Endothelial cell of umbilical vein (primary cell): ENCODE measurements at regions of chr7 and their contacts with region 1.

Region 1: DNA sequence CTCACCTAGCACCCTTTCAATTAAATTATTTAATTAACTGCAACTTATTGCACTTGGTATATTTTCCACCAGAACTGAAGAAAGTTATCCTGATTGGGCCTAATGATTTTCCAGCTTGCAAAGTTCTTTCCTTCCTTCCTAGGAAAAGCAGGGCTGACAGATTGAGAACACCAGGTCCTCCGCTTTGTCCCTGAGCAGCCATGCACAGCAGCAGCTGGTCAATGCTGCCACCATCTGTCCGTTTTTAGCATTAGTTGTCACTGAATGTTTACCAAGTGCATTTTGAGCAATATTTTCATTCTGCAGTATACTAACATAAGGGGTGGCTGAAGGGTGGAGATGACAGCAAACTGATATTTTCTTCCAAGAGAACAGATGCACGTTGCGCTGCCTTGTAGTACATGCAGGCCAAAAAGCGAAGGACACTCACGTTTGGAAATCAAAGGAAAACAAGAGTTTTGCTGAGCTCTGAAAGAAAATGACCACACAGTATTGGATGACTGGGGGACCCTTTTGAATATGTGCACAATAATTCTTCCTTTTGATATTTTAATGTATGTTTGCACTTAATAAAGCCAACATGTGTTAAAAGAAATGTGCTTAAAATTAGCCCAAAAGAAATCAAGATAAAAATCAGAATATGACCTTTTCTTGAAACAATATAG is 248.8 kb upstream of the PTN start:
- DNase-seq: peak; percentile 85
- H3K4me3 ChIP-seq: no peak overlapping the region
- H3K27ac ChIP-seq: peak overlapping the region; percentile 83
- H3K4me1 ChIP-seq: peaks cover 10% of the 10 kb centered on the region
- H3K27me3 ChIP-seq: peaks cover 0 to 1% of the 10 kb centered on the region in 2 experiments
- CTCF ChIP-seq: peak; percentile 64 to 90
- POLR2A ChIP-seq: no peak

Region 2: GRCh38 chr7:136405931-136406777 is 1186.2 kb before region 1 on chr7:
- CTCF ChIA-PET with region 1: interaction called, 13 read pairs
- POLR2A ChIA-PET with region 1: no interaction called
- dilution Hi-C with region 1: no loop called
- intact Hi-C with region 1: no loop called
- DNase-seq: peak; percentile 48
- H3K4me3 ChIP-seq: no peak overlapping the region
- H3K27ac ChIP-seq: no peak overlapping the region
- H3K4me1 ChIP-seq: no peaks in the 10 kb centered on the region
- H3K27me3 ChIP-seq: no peaks in the 10 kb centered on the region
- CTCF ChIP-seq: peak; percentile 55 to 67
- POLR2A ChIP-seq: no peak

Region 3: GRCh38 chr7:136925044-136925443 is 667.3 kb before region 1 on chr7:
- CTCF ChIA-PET with region 1: interaction called, 9 read pairs
- POLR2A ChIA-PET with region 1: no interaction called
- dilution Hi-C with region 1: no loop called
- intact Hi-C with region 1: loop called (anchors 5 kb)
- DNase-seq: peak; percentile 93
- H3K4me3 ChIP-seq: peak overlapping the region in 1 of 3 experiments; percentile 43
- H3K27ac ChIP-seq: peak overlapping the region; percentile 70
- H3K4me1 ChIP-seq: peaks cover 30% of the 10 kb centered on the region
- H3K27me3 ChIP-seq: no peaks in the 10 kb centered on the region
- CTCF ChIP-seq: no peak
- POLR2A ChIP-seq: peak; percentile 60

Region 4: DNA sequence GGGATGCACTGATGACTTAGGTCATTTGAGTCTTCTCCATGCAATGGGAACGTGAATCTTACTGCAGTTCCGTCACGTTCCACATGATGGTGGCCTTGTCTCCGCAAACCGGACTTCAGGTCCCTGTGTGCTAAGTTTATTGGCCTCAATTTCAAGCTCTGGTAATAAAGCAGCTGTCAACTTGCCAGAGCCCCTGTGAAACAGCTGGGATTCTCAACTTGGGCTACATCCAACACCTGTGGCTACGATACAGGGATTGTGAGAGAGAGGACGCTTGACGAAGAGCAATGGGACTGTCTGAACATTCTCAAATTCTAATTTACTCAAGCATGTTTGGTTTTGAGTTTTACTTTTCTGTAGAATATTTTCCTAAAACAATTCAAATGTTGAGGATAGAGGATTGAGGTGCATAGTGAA is 423.1 kb before region 1 on chr7:
- CTCF ChIA-PET with region 1: interaction called, 53 read pairs
- POLR2A ChIA-PET with region 1: no interaction called
- dilution Hi-C with region 1: no loop called
- intact Hi-C with region 1: no loop called
- DNase-seq: peak; percentile 53
- H3K4me3 ChIP-seq: no peak overlapping the region
- H3K27ac ChIP-seq: no peak overlapping the region
- H3K4me1 ChIP-seq: no peaks in the 10 kb centered on the region
- H3K27me3 ChIP-seq: no peaks in the 10 kb centered on the region
- CTCF ChIP-seq: peak; percentile 46 to 49
- POLR2A ChIP-seq: no peak

Region 5: GRCh38 chr7:137454246-137454724 is 138.1 kb before region 1 on chr7:
- CTCF ChIA-PET with region 1: interaction called, 30 read pairs
- POLR2A ChIA-PET with region 1: interaction called, 3 read pairs
- dilution Hi-C with region 1: no loop called
- intact Hi-C with region 1: loop called (anchors 1 kb)
- DNase-seq: peak; percentile 50
- H3K4me3 ChIP-seq: no peak overlapping the region
- H3K27ac ChIP-seq: no peak overlapping the region
- H3K4me1 ChIP-seq: no peaks in the 10 kb centered on the region
- H3K27me3 ChIP-seq: peaks cover 3 to 6% of the 10 kb centered on the region in 2 experiments
- CTCF ChIP-seq: peak; percentile 31 to 42
- POLR2A ChIP-seq: no peak

Region 6: DNA sequence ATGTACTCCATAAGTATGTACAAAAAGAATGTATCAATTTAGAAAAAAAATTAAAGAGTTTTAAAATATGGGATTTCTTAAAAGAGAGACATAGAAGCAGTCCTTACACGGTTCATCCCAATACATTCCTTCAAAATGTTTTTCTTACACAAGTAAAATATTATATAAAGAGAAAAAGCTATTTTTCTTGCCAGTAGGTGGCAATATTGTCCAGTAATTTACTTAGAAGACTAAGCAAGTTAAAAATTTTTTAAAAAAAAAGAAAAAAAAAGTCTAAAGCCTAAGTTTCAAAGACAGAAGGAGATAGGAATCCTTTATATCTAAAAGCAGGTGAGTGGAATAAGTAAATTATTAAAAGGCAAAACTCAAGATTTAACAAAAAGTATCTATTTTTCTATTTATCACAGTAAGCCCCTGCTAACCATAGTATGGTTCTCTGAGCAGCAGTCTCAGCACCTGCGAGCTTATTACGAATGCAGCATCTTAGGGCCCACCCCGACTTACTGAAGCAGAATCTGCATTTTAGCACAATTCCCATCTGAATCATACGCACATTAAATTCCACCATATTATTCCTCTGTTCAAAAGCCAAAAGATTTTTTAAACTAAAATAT is 13.8 kb after region 1 on chr7:
- CTCF ChIA-PET with region 1: interaction called, 19 read pairs
- POLR2A ChIA-PET with region 1: no interaction called
- dilution Hi-C with region 1: no loop called
- intact Hi-C with region 1: no loop called
- DNase-seq: peak; percentile 62
- H3K4me3 ChIP-seq: no peak overlapping the region
- H3K27ac ChIP-seq: no peak overlapping the region
- H3K4me1 ChIP-seq: no peaks in the 10 kb centered on the region
- H3K27me3 ChIP-seq: peaks cover 15 to 24% of the 10 kb centered on the region in 2 experiments
- CTCF ChIP-seq: peak in 1 of 2 donors; percentile 19
- POLR2A ChIP-seq: no peak